ENCODE measurements at regions of chr6 and their contacts with region 1.

Region 1: DNA sequence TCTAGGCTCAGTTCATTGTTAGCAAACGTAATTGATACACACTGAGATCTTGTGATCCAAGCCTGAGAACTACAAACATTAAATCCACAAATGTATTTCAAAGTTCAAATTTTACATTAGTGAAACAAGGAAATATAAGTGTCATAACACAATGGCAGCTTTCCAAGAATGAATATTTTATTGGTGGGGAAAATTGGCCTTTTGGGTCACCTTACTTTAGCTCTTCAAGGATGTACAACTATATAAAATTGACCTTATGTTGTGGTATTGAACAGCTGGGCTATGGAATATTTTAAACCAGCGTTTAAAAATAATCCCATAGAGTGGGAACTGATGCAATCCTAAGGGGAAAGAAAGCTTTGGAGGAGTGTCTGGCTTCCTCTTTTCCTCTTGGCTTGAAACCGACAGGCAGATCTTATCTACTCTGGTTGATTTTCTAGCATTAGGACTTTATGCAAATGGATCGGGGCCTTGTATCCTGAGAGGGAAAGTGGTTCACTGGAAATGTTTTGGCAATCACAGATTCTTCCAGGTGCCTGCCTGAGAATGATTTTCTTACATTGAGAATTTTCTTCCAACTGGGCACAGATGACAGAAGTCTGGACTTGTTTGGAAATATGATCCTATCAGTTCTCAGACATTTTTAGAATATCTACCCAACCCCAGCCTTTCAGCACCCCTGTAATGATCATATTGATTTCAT is 184.8 kb upstream of the ECI2 start:
- DNase-seq: peak; percentile 70
- H3K4me3 ChIP-seq: peak overlapping the region in 1 of 3 experiments; percentile 2
- H3K27ac ChIP-seq: peak overlapping the region; percentile 93
- H3K4me1 ChIP-seq: peaks cover 55% of the 10 kb centered on the region
- H3K27me3 ChIP-seq: no peaks in the 10 kb centered on the region
- CTCF ChIP-seq: no peak

Region 2: DNA sequence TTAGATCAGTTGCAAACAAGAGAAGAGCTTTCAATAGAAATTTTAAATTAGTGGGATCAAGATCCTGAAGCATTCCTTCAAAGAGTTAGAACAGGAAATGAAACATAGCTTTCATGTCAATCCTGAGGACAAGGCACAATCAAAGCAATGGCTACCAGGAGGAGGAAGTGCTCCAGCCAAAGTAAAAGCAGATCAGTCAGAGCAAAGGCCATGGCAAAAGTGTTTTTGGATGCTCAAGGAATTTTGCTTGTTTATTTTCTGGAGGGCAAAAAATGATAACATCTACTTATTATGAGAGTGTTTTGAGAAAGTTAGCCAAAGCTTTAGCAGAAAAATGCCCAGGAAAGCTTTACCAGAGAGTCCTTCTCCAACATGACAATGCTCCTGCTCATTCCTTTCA is 123.8 kb before region 1 on chr6:
- CTCF ChIA-PET with region 1: no interaction called
- dilution Hi-C with region 1: no loop called
- in situ Hi-C with region 1: no loop called
- intact Hi-C with region 1: no loop called
- DNase-seq: no peak
- H3K4me3 ChIP-seq: no peak overlapping the region
- H3K27ac ChIP-seq: no peak overlapping the region
- H3K4me1 ChIP-seq: peaks cover 10% of the 10 kb centered on the region
- H3K27me3 ChIP-seq: no peaks in the 10 kb centered on the region
- CTCF ChIP-seq: no peak

Region 3: DNA sequence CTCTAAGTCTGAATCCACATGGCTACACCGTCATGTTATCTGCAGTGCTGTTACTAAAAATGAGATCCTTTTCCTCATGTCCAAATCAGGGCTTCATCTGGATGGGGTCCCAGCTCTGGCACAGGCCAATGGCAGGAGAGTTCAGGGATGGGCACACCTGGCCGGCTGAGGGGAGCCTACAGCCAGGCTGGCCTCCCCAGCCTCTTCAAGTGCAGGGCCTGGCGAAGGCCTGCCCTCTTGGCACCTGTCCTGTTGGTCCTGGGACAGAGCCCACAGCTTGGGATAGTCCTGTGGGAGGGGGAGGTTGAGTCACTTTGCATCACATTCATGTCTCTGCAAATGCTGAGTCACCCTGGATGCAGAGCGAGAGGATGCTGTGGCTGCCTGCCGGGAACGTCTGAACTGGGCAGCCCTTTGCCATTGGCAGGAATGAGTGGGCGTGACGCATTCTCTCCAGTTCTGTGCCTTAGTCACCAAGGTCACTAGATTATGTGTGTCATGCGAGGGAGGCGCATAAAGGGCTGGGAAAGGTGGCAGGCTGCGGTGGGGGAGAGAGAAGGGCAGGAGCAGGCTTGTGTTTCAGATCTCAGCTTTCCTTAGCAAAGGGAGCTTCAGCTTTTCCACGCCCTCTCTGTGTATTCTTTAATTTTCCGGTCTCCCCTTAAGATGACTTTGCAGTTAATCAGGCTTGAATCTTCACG is 38.4 kb after region 1 on chr6:
- CTCF ChIA-PET with region 1: no interaction called
- dilution Hi-C with region 1: loop called (anchors 5 kb)
- in situ Hi-C with region 1: no loop called
- intact Hi-C with region 1: loop called (anchors 1 kb)
- DNase-seq: peak; percentile 100
- H3K4me3 ChIP-seq: peak overlapping the region in 1 of 3 experiments; percentile 6
- H3K27ac ChIP-seq: peak overlapping the region; percentile 92
- H3K4me1 ChIP-seq: peaks cover 39% of the 10 kb centered on the region
- H3K27me3 ChIP-seq: no peaks in the 10 kb centered on the region
- CTCF ChIP-seq: no peak

Region 4: GRCh38 chr6:4460586-4461475 is 140.7 kb after region 1 on chr6:
- CTCF ChIA-PET with region 1: no interaction called
- dilution Hi-C with region 1: no loop called
- in situ Hi-C with region 1: no loop called
- intact Hi-C with region 1: loop called (anchors 5 kb)
- DNase-seq: no peak
- H3K4me3 ChIP-seq: no peak overlapping the region
- H3K27ac ChIP-seq: no peak overlapping the region
- H3K4me1 ChIP-seq: peaks cover 26% of the 10 kb centered on the region
- H3K27me3 ChIP-seq: no peaks in the 10 kb centered on the region
- CTCF ChIP-seq: no peak

Region 5: GRCh38 chr6:4640139-4640538 is 320.0 kb after region 1 on chr6:
- CTCF ChIA-PET with region 1: no interaction called
- dilution Hi-C with region 1: no loop called
- in situ Hi-C with region 1: no loop called
- intact Hi-C with region 1: loop called (anchors 2 kb)
- DNase-seq: peak; percentile 85
- H3K4me3 ChIP-seq: no peak overlapping the region
- H3K27ac ChIP-seq: peak overlapping the region; percentile 21
- H3K4me1 ChIP-seq: peaks cover 25% of the 10 kb centered on the region
- H3K27me3 ChIP-seq: no peaks in the 10 kb centered on the region
- CTCF ChIP-seq: no peak

Measured in mammary epithelial cell (primary cell).